ENCODE measurements at regions of chr6 and their contacts with region 1.

Region 1: DNA sequence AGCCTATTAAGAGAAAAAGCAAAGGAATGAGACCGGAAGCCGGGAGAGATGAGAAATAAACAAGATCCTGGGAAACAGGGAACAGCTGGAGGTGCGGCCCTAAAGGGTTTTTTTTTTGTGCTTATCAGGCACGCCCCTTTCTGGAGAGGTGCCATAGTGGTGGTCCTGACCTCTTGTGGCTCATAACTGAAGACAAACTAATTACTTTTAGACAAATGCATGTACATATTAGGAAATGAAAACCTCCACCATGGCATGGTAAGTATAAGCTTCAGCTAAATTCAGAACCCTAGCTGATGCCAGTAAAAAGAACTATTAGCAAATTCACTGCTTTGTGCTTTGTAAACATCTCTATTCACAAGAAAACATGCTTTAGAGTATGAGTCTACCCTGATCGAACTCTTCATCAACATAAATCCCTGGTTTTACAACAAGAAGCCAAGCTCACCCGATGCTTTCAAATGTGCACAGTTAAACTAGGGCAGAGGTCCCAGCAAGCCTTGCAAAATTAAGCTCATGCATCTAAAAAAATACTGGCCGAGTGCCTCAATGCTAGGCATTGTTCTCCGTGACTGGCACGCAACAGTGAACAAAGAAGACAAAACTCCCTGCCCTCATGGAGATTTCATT is 96.4 kb upstream of the MRPS10 start:
- DNase-seq: no peak
- H3K4me3 ChIP-seq: no peak overlapping the region
- H3K27ac ChIP-seq: peak overlapping the region; percentile 40 to 74
- H3K4me1 ChIP-seq: no peaks in the 10 kb centered on the region
- H3K27me3 ChIP-seq: no peaks in the 10 kb centered on the region
- CTCF ChIP-seq: no peak
- POLR2A ChIP-seq: no peak

Region 2: GRCh38 chr6:42482174-42482573 is 168.1 kb after region 1 on chr6:
- intact Hi-C with region 1: loop called (anchors 5 kb)
- DNase-seq: no peak
- H3K4me3 ChIP-seq: no peak overlapping the region
- H3K27ac ChIP-seq: no peak overlapping the region
- H3K4me1 ChIP-seq: no peaks in the 10 kb centered on the region
- H3K27me3 ChIP-seq: no peaks in the 10 kb centered on the region
- CTCF ChIP-seq: no peak
- POLR2A ChIP-seq: no peak